Heart right ventricle (tissue), 16 donors: ENCODE measurements at regions of chr1 and their contacts with region 1.

Region 1: GRCh38 chr1:154730259-154730658 is 122.3 kb upstream of the ADAR start:
- DNase-seq: peak in 1 of 2 donors; percentile 70
- ATAC-seq: peak; percentile 42 to 89 (median 71)
- H3K4me3 ChIP-seq: no peak overlapping the region
- H3K27ac ChIP-seq: peak overlapping the region in 9 of 10 donors; percentile 43 to 91 (median 87)
- H3K4me1 ChIP-seq: peaks cover 7 to 80% (median 47%) of the 10 kb centered on the region in 9 donors
- H3K27me3 ChIP-seq: no peaks in the 10 kb centered on the region
- CTCF ChIP-seq: no peak

Region 2: DNA sequence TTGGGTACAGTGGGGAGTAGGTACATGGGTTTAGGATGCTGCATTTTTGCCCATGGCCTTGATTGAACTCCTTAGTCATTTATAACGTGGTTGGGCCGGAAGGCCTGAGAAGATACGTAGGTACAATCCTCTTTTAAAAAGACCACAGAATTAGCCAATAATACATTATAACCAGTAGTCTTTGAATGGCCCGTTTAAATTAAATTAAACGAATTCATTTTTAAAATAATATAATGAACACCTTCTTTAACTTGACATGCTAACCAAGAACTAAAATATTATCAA is 102.2 kb before region 1 on chr1:
- intact Hi-C with region 1: no loop called
- DNase-seq: no peak
- ATAC-seq: peak in 7 of 8 donors; percentile 14 to 40 (median 28)
- H3K4me3 ChIP-seq: peak overlapping the region; percentile 74 to 99 (median 94)
- H3K27ac ChIP-seq: peak overlapping the region; percentile 68 to 96 (median 95)
- H3K4me1 ChIP-seq: peaks cover 0 to 49% (median 17%) of the 10 kb centered on the region in 9 donors
- H3K27me3 ChIP-seq: peaks cover 0 to 17% (median 0%) of the 10 kb centered on the region in 7 donors
- CTCF ChIP-seq: no peak

Region 3: GRCh38 chr1:154682254-154682653 is 48.0 kb before region 1 on chr1:
- intact Hi-C with region 1: no loop called
- DNase-seq: no peak
- ATAC-seq: no peak
- H3K4me3 ChIP-seq: no peak overlapping the region
- H3K27ac ChIP-seq: no peak overlapping the region
- H3K4me1 ChIP-seq: no peaks in the 10 kb centered on the region
- H3K27me3 ChIP-seq: no peaks in the 10 kb centered on the region
- CTCF ChIP-seq: no peak

Region 4: GRCh38 chr1:155069551-155070157 is 339.4 kb after region 1 on chr1:
- intact Hi-C with region 1: loop called in 1 of 10 experiments (anchors 5 kb)
- DNase-seq: no peak
- ATAC-seq: no peak
- H3K4me3 ChIP-seq: no peak overlapping the region
- H3K27ac ChIP-seq: no peak overlapping the region
- H3K4me1 ChIP-seq: peaks cover 0 to 20% (median 18%) of the 10 kb centered on the region in 9 donors
- H3K27me3 ChIP-seq: no peaks in the 10 kb centered on the region
- CTCF ChIP-seq: no peak